ENCODE measurements at regions of chr3 and their contacts with region 1.

Region 1: GRCh38 chr3:149388001-149388435 is 10.6 kb upstream of the TM4SF1 start:
- DNase-seq: no peak

Region 2: DNA sequence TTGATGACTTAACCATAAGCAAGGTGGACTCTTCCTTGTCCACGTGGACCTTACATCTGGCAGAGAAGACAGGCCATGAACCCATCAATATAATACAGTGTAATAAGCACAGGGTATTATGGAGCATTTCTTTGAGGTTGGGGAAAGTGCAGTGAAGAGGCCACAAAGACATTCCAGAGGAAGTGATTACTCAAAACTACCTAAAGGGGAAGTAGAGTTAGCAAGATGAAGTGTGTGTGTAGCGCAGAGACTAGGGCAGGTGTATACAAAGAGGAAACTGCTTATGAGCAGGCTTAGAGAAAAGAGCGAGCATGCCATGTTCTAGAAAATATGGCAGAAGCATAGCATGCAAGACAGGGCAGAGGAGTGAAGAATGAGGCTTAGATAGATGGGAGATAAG is 184.3 kb before region 1 on chr3:
- intact Hi-C with region 1: no loop called
- DNase-seq: no peak

Region 3: GRCh38 chr3:149364624-149365023 is 23.4 kb before region 1 on chr3:
- intact Hi-C with region 1: loop called (anchors 2 kb)
- DNase-seq: no peak

Region 4: GRCh38 chr3:149581681-149582370 is 193.8 kb after region 1 on chr3:
- intact Hi-C with region 1: no loop called
- DNase-seq: peak in 3 of 10 donors; percentile 17 to 20 (median 18)

Measured in posterior cingulate gyrus (tissue), 11 donors.